ENCODE measurements at regions of chr12 and their contacts with region 1.

Region 1: DNA sequence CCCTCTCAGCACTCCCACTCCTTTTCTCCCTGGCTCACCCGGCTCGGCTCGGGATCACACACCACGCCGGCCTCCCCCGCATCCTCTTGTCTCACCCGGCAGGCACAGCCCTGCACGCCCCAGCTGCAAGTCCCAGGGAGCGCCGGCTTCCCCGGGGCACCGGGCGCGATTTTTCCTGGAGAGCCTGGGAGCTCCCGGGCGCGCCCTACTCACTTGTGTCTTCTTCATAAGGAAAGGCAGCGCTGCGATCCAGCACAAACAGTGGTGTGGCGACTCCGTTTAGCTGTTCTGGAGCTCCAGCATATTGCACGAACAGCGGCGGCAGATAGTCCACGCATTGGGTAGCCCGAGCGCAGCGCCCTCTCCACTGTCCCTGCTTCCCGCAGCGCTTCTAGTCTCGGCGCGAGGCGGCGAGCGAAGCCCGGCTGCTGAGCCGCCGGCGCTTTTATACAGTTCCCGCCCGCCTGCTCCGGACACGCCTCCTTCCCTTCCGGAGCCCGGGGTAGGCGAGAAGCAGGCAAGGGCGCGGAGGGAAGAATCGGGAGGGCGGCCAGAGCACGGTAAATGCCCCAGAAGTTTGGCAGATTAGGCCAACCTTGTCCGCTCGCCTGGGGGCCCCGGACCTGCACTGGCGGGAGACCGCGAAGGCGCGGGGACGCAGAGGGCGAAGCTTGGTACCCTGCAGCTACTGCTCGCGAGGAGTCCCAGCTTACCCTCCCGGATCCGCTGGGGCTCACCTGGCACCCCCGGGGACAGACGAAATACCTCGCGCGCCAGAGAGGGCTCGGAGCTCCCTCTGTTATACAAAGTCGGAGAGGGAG is at the start of gene KITLG:
- DNase-seq: peak; percentile 56
- ATAC-seq: peak; percentile 96
- H3K4me3 ChIP-seq: peak within 1 kb of the TSS; percentile 68 to 74 (median 72)
- H3K27ac ChIP-seq: no peak within 1 kb of the TSS
- H3K4me1 ChIP-seq: peaks cover 23% of the 10 kb centered on the region
- H3K27me3 ChIP-seq: no peaks in the 10 kb centered on the region
- CTCF ChIP-seq: peak; percentile 59
- EP300 ChIP-seq: no peak
- POLR2A ChIP-seq: peak; percentile 26 to 79; a peak in 2 of 4 replicates
- RAD21 ChIP-seq: peak; percentile 23; the same call in 1 of the 2 replicates
- total RNA-seq, gene KITLG: 4.3 and 5.3 TPM in 2 replicates

Region 2: DNA sequence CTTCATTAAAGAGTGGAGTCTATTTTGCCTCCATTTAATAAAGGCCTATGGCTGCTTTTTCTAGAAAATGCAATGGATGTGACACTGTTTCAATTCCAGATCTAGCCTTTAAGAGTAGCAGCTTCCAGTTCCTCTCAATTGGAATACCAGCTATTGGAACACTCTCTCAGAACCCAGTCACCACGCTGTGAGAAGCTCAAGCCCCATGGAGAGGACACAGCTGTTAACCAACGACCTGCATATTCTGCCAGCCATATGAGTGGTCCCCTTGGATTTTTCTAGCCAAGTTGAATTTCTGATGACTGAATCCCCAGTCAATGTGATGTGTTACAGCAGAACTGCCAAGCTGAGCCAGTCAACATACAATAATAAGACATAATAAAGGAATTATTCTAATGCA is 306.4 kb before region 1 on chr12:
- CTCF ChIA-PET with region 1: no interaction called
- POLR2A ChIA-PET with region 1: no interaction called
- in situ Hi-C with region 1: no loop called
- intact Hi-C with region 1: no loop called
- DNase-seq: no peak
- ATAC-seq: no peak
- H3K4me3 ChIP-seq: no peak overlapping the region
- H3K27ac ChIP-seq: no peak overlapping the region
- H3K4me1 ChIP-seq: no peaks in the 10 kb centered on the region
- H3K27me3 ChIP-seq: no peaks in the 10 kb centered on the region
- CTCF ChIP-seq: no peak
- EP300 ChIP-seq: no peak
- POLR2A ChIP-seq: no peak
- RAD21 ChIP-seq: no peak

Region 3: DNA sequence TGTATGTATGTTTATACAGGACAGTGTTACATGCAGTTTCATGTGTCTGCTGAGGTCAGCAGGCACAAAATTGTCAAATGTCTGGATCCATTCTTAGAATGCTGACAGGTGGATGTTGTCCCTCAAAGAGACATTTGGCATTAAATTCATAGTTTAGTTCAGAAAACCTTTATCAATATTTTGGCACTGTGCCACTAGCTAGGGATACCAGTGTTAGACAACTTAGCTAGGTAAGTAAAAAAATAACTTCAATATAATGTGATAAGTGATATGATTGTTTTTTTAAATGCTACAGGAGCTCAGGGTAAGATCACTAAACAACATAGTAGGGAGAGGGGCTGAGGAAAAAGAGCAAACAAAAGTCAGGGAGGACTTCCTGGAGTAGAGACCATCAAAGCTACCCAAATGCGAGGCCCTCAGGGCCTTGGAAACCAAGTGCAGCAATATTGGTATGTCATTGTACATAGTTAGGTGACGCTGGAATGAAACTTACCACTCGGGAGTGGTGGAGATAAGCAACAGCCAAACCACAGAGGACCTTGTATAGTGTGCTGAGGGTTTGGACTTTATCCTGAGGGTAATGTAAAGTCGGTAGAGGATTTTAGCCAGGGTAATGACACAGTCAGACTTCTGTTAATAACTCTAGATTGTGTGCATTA is 14.0 kb before region 1 on chr12:
- CTCF ChIA-PET with region 1: no interaction called
- POLR2A ChIA-PET with region 1: interaction called, 3 read pairs
- in situ Hi-C with region 1: no loop called
- intact Hi-C with region 1: loop called (anchors 1 kb)
- DNase-seq: peak; percentile 84
- ATAC-seq: peak; percentile 92
- H3K4me3 ChIP-seq: no peak overlapping the region; a peak in 1 of 6 replicates
- H3K27ac ChIP-seq: no peak overlapping the region
- H3K4me1 ChIP-seq: peaks cover 44% of the 10 kb centered on the region
- H3K27me3 ChIP-seq: no peaks in the 10 kb centered on the region
- CTCF ChIP-seq: no peak
- EP300 ChIP-seq: no peak; a peak in 1 of 4 replicates
- POLR2A ChIP-seq: no peak
- RAD21 ChIP-seq: no peak

Region 4: DNA sequence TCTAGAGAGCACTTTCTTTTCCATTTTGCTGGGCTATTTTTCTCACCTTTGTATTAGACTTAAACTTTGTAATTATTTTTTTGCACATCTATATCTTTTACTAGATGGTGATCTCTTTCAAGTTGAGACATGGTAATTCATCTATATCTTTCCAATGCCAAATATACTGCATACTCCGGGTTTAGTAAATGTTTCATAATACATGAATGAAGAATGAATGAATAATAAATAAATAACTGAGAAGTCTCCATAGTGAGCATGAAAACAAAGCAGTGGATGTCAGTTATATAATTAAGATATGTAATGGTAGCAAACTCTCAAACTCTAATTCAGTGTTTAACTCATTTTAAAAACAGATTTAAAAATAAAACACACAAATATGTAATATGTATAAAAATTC is 342.6 kb after region 1 on chr12:
- CTCF ChIA-PET with region 1: no interaction called
- POLR2A ChIA-PET with region 1: no interaction called
- in situ Hi-C with region 1: no loop called
- intact Hi-C with region 1: loop called (anchors 5 kb)
- DNase-seq: no peak
- ATAC-seq: no peak
- H3K4me3 ChIP-seq: no peak overlapping the region
- H3K27ac ChIP-seq: no peak overlapping the region
- H3K4me1 ChIP-seq: peaks cover 20% of the 10 kb centered on the region
- H3K27me3 ChIP-seq: no peaks in the 10 kb centered on the region
- CTCF ChIP-seq: no peak
- EP300 ChIP-seq: no peak
- POLR2A ChIP-seq: no peak
- RAD21 ChIP-seq: no peak

Measured in HepG2 (cell line).